Vagina (tissue), 2 donors: ENCODE measurements at regions of chr12 and their contacts with region 1.

Region 1: GRCh38 chr12:121888478-121889266 is at the start of gene PSMD9:
- DNase-seq: peak; percentile 97
- H3K4me3 ChIP-seq: peak within 1 kb of the TSS; percentile 71 to 89
- H3K27ac ChIP-seq: peak within 1 kb of the TSS; percentile 97
- H3K4me1 ChIP-seq: peaks cover 32% of the 10 kb centered on the region
- H3K27me3 ChIP-seq: no peaks in the 10 kb centered on the region
- CTCF ChIP-seq: peak; percentile 42 to 52 (median 44)
- POLR2A ChIP-seq: peak in 1 of 2 donors; percentile 56
- total RNA-seq, gene PSMD9: 46.2 TPM

Region 2: DNA sequence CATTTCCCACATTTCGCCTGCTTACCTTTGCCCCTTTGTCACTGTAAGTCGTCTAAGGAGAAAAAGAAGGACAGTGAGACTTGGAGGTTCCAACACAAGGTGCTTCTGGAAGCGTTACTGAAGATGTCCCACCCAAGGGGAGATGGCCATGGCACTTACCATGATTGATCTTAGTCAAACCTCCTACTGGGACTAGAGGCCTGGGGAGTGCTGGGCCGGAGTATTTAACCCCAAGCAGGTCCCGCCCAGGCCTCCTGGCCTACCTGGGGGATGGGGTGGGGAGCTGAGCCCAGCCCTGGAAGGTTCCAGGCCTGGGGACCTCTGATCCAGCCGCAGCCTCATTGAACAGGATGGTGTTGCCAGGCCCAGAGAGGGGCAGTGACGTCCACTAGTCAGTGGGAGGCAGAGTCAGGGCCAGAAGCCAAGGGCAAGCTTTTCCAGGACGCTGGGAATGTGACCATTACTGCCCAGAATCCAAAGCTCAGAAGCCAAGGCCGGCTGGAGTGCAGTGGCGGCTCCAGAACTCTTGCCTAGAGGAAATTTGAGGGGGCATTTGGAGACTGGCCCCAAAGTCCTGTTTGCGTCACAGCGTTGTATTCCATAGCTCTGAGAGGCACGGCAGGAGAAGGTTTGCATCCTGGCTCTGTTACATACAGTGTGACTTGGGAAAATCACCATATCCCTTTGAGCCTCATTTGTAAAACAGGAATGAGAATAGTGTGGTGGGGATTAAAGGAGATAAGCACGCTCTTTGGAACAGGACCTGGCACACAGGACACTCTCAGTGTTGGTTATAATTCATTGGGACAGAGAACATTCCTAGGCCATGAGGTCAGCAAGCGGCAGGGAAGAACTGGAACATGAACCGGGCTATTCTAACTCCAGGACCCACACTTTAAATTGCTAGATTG is 29.8 kb before region 1 on chr12 and contains the start of gene HPD:
- intact Hi-C with region 1: loop called (anchors 2 kb)
- DNase-seq: peak in 1 of 2 donors; percentile 94
- H3K4me3 ChIP-seq: peak within 1 kb of the TSS in 1 of 2 donors; percentile 16
- H3K27ac ChIP-seq: peak within 1 kb of the TSS; percentile 95
- H3K4me1 ChIP-seq: peaks cover 32% of the 10 kb centered on the region
- H3K27me3 ChIP-seq: no peaks in the 10 kb centered on the region
- CTCF ChIP-seq: no peak
- POLR2A ChIP-seq: no peak
- total RNA-seq, gene HPD: not detected

Region 3: DNA sequence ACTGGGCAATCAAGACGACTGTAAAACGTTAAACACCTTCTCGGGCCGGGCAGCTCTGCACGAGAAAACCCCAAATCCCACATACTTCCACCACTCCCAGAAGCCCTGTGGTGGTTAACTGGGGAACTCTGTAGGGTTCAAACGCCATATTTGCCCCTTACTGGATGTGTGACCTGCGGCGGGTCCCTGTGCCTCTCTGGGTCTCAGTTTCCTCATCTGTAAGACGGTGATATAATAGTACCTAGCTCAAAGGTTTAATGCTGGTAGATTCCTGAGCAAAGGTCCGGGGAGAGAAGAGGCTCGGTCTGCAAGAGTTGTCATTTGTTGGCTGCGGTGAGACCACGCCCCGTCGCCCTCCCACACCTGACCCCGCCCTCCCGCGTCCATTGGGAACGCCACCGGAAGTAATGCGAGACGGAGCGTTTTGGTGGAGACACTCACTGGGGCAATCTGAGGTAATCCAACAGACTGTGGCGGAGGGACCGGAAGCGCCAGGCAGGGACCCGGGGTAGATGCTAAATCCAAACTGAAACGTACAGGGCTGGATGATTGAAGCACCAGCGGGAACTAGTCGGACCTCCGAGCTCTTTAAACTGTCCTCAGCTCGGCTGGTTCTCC is 1085.7 kb after region 1 on chr12:
- intact Hi-C with region 1: loop called (anchors 5 kb)
- DNase-seq: peak in 1 of 2 donors; percentile 99
- H3K4me3 ChIP-seq: peak overlapping the region; percentile 93 to 94
- H3K27ac ChIP-seq: peak overlapping the region; percentile 99
- H3K4me1 ChIP-seq: peaks cover 48% of the 10 kb centered on the region
- H3K27me3 ChIP-seq: no peaks in the 10 kb centered on the region
- CTCF ChIP-seq: no peak
- POLR2A ChIP-seq: no peak